Activated CD4-positive, alpha-beta memory T cell treated with anti-CD3 and anti-CD28 coated beads, Interleukin-2, amount 10 ng/mL, durations not matched to agents 7 days and 5 days (primary cell): ENCODE measurements at regions of chr6 and their contacts with region 1.

Region 1: DNA sequence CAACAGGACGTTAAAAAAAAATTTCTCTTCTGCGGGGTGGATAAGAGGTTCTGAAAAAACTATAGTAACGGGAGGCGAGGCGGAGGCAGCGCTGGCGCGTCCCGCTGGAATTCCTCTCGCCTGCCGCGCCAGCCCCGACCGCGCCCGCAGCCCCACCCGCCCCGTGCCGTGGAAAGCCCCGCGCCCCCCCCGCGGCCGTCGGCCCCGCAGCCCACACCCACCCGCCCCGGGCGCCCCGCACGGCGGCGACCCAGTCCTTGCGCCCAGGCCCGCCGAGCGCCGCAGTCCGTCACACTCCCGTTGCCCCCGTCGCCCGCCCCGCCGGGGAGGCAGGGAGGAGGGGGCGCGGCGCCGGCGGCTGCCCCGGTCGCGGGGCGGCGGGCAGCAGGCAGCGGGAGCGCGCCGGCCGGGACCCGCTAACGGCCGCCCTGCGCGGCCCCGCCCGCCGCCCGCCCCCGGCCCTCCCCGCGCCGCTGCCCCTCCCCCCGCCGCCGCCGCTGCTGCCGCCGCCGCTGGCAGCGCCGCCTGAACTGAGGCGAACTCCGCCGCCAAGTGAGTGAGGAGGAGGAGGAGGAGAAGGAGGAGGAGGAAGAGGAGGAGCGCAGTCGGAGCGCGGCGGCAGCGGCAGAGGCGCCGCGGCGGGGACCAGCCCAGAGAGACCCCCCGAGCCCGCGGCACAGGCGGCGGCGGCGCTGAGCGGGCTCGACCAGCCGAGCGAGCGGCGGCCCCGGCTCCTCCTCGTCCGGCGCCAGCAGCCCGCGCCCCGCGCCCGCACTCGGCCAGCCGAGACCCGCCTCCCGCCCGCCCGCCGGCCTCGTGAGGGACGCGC is at the start of gene QKI:
- DNase-seq: peak; percentile 78
- H3K4me3 Mint-ChIP-seq: peak within 1 kb of the TSS; percentile 78
- H3K27ac Mint-ChIP-seq: peak within 1 kb of the TSS; percentile 91
- H3K4me1 Mint-ChIP-seq: peaks cover 38% of the 10 kb centered on the region
- H3K27me3 Mint-ChIP-seq: peaks cover 8% of the 10 kb centered on the region
- total RNA-seq, gene QKI: 67.6 to 74.6 TPM

Region 2: DNA sequence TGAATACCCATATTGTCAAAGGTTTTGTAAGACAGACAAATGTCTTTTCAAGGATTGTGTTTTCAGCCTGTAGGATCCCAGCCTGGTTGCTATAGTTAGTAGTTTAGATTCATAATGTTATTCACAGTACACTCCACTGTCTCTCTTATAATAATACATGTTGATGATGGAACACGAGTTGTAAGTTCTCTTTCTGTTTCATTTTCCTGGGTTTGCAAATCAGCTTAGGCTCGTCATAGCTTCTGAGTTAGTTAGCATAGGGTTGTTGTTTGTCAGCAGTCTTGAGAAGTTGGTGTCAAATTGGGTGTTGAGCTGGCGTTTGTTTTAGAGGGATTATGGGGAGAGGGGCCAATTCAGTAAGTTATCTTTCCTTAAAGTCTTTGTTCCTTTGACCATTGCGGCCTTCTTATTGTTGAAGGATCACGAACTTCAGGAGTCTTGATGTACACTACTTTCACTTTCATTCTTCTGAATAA is 46.0 kb after region 1 on chr6:
- CTCF ChIA-PET with region 1: interaction called, 12 read pairs
- POLR2A ChIA-PET with region 1: interaction called, 24 read pairs
- DNase-seq: peak; percentile 33
- H3K4me3 Mint-ChIP-seq: peak overlapping the region; percentile 92
- H3K27ac Mint-ChIP-seq: peak overlapping the region; percentile 98
- H3K4me1 Mint-ChIP-seq: peaks cover 48% of the 10 kb centered on the region
- H3K27me3 Mint-ChIP-seq: no peaks in the 10 kb centered on the region

Region 3: GRCh38 chr6:163554663-163555062 is 140.3 kb after region 1 on chr6:
- CTCF ChIA-PET with region 1: interaction called, 17 read pairs
- POLR2A ChIA-PET with region 1: no interaction called
- DNase-seq: peak; percentile 66
- H3K4me3 Mint-ChIP-seq: no peak overlapping the region
- H3K27ac Mint-ChIP-seq: no peak overlapping the region
- H3K4me1 Mint-ChIP-seq: no peaks in the 10 kb centered on the region
- H3K27me3 Mint-ChIP-seq: no peaks in the 10 kb centered on the region

Region 4: DNA sequence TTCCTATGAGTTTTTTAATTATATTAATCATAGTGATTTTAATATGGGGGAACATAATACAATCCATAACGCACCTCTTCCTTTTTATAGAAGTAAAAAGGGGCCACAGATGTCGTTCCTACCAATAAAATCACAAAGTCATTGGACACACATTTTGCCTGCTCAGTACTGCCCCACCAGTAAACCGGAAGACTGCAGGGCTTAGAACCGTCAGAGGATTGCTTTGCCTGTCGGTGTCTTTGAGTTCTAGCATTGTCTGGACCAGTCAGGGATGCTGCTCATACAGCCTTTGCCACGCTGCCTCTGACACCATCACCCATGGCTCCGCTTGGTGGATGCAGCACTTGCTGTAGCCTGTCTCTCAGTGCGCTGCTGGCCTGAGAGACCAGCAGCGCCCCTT is 1041.5 kb after region 1 on chr6:
- CTCF ChIA-PET with region 1: no interaction called
- POLR2A ChIA-PET with region 1: no interaction called
- DNase-seq: no peak
- H3K4me3 Mint-ChIP-seq: no peak overlapping the region
- H3K27ac Mint-ChIP-seq: no peak overlapping the region
- H3K4me1 Mint-ChIP-seq: no peaks in the 10 kb centered on the region
- H3K27me3 Mint-ChIP-seq: no peaks in the 10 kb centered on the region